ENCODE measurements at regions of chr10 and their contacts with region 1.

Region 1: DNA sequence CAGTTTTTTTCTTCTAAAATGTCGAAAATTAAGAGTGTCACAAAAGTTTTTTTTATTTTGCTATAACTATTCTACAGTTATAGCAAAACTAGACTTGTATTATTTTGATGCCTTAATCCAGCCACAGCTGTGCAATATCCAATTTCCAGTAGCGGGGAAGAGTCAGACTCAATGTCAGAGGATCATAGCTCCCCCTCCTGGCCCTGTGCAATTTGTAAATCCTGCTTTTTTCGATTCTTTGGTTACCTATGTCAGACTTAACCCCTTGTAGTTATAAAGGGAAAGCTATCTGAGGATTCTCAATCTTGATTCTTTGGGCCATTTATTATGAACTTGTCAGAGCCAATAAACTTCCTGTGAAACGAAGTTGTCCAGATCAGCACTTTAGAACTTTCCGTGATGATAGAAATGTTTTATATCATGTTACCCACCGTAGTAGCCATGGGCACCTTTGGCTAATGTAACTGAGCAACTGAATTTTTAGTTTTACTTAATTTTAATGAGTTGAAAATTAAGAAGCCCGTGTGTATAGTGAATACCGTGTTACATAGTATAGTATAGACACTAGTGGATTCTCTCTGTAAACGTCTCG is 87.7 kb upstream of the PRKCQ start:
- DNase-seq: peak; percentile 77
- H3K4me3 Mint-ChIP-seq: no peak overlapping the region
- H3K27ac Mint-ChIP-seq: no peak overlapping the region
- H3K4me1 Mint-ChIP-seq: peaks cover 14% of the 10 kb centered on the region
- H3K27me3 Mint-ChIP-seq: no peaks in the 10 kb centered on the region

Region 2: DNA sequence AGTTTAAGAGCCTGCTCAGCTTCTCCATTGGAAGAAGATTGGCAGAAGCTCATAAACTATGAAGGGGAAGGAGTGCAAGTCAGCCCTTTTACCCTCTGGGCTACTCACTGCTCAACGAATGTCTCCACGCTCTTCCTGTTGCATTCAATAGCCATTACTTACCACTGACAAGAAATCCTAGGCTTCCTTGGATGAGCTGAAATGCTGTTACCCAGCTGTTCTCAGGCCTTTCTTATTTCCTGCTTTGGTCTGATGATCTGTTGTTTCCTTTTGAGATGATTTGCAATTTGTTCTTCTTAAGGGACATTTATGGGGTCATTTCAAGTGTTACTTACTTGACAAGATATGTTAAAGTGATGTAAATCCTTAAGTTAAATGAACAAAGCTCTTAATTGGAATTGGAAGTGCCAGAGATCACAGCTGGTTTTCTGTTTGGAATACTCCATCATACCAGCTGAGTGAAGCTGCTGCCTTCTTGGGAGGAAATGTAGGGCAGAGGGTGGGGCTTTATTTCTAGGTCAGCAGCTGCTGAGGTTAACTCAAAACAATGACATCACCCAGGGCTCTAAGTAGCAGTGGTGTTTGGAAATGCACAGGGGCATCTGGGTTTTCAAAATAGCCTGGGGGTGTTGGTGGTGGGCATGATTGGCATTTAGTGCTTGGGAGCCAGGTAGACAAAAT is 257.7 kb before region 1 on chr10:
- CTCF ChIA-PET with region 1: interaction called, 14 read pairs
- intact Hi-C with region 1: no loop called
- DNase-seq: peak; percentile 40
- H3K4me3 Mint-ChIP-seq: no peak overlapping the region
- H3K27ac Mint-ChIP-seq: peak overlapping the region; percentile 17
- H3K4me1 Mint-ChIP-seq: peaks cover 33% of the 10 kb centered on the region
- H3K27me3 Mint-ChIP-seq: no peaks in the 10 kb centered on the region

Region 3: DNA sequence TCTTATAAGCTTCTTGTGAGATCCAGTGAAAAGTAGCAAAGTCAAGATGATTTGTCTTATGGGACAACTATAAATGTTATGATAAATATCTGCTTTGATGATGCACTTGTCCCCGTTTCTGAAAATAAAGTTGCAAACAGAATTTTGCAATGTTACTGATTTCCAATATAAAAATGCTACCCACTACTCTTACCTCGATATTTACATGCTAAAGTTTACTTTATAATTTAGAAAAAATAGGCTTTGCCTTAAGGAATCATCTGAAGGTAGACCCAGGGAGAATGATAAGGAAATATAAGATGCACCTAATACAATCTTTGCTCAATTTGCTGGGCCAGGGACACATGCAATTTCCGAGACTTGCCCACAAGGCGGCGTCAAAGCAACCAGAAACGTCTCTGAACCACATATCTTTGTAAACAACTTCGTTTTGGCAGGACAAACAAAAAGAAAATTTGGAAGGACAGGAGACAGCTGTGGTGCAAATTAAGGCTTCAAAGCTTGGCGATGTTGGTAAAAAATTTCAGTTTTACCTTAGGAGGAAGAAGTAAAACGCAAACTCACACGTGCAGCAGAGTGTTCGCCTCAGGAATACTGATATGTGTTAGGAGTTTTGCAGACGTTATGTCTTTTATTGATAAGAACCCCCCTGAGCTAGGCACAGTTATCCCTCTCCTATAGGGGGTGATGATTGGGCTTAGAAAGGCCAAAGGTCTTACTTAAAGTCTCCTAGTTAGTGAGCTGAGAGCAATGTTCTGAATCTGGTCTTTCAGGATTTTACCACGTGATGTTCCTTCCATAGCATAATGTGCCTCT is 222.1 kb before region 1 on chr10:
- CTCF ChIA-PET with region 1: interaction called, 18 read pairs
- intact Hi-C with region 1: loop called (anchors 1 kb)
- DNase-seq: peak; percentile 80
- H3K4me3 Mint-ChIP-seq: no peak overlapping the region
- H3K27ac Mint-ChIP-seq: no peak overlapping the region
- H3K4me1 Mint-ChIP-seq: peaks cover 37% of the 10 kb centered on the region
- H3K27me3 Mint-ChIP-seq: no peaks in the 10 kb centered on the region

Region 4: GRCh38 chr10:6601246-6601805 is 66.4 kb before region 1 on chr10:
- CTCF ChIA-PET with region 1: interaction called, 3 read pairs
- intact Hi-C with region 1: loop called (anchors 2 kb)
- DNase-seq: peak; percentile 66
- H3K4me3 Mint-ChIP-seq: peak overlapping the region; percentile 51
- H3K27ac Mint-ChIP-seq: peak overlapping the region; percentile 88
- H3K4me1 Mint-ChIP-seq: peaks cover 71% of the 10 kb centered on the region
- H3K27me3 Mint-ChIP-seq: no peaks in the 10 kb centered on the region

Region 5: DNA sequence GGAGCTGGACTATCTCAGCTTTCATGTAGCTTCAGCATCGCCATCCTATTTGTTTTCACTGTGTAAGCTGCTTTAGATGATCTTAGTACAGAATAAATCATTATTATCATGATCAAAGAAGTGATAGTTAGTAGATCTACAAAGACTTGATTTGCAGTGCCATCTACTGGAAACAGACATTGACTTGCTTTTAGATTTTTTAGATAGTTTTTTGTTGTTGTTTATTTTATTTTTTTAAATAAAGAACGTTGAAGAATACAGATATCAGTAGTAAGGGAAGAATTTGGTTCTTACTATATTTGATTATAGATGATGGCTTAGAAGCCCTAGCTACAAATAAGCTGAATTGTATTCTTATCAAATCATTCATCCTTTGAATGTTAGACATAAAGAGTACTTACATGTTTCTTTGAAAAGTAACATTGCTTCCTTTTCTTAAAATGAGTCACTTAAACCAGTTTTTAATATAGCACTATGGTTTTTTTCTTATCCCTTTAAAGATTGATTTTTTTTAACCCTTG is 749.4 kb after region 1 on chr10:
- CTCF ChIA-PET with region 1: interaction called, 4 read pairs
- intact Hi-C with region 1: loop called (anchors 1 kb)
- DNase-seq: no peak
- H3K4me3 Mint-ChIP-seq: no peak overlapping the region
- H3K27ac Mint-ChIP-seq: no peak overlapping the region
- H3K4me1 Mint-ChIP-seq: peaks cover 17% of the 10 kb centered on the region
- H3K27me3 Mint-ChIP-seq: peaks cover 11% of the 10 kb centered on the region